H1 (cell line): ENCODE measurements at regions of chr10 and their contacts with region 1.

Region 1: DNA sequence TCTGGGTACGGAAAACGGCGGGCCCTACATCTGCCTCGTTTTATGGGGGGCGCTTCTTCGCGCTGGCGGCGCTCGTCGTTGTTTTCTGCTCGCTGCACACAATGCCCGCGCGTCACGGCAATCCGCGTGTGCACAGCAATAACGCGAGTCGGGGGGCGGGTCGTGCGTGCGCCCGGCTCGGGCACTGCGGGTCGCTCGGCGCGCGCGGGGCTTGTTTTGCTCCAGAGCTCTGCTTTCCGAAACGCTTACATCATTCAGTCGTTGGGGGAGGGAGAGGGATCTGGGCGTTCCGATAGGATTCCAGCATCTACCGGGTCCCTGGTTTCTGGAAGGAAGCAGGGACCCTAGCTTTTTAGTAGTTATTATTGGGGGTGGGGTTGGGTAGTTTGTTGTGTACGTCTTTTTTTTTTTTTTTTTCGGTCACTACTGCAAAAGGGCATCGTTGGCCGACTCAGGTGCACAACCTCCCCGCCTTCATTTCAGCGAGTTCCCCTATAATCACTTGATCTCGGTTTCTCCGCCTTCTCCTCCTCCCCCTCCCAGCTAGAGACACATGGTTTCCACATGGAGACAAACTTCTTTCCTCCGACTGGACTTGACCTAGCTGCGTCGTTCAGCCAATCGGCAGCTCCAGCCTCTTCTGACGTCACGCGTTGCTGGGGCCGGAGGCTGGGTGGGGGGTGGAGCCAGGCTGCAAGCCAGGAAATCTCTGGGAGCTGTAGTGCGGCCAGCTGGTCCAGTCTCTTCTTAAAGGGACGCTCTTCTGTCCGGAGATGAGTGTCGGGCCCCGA is 3.5 kb downstream of the MXI1 start:
- DNase-seq: peak; percentile 93 to 97
- H3K4me3 ChIP-seq: peak overlapping the region; percentile 73 to 80 (median 78)
- H3K27ac ChIP-seq: peak overlapping the region; percentile 2; the same call in 1 of the 2 replicates
- H3K4me1 ChIP-seq: peaks cover 1 to 20% (median 14%) of the 10 kb centered on the region in 4 experiments; a peak in 6 of 7 replicates
- H3K27me3 ChIP-seq: peaks cover 18 to 67% (median 49%) of the 10 kb centered on the region in 4 experiments
- CTCF ChIP-seq: no peak
- EP300 ChIP-seq: 0 out of 3 replicates have a peak, but pooled peaks of 1 of the 2 experiments have one; percentile 30
- POLR2A ChIP-seq: peak; percentile 47 to 59
- RAD21 ChIP-seq: no peak

Region 2: DNA sequence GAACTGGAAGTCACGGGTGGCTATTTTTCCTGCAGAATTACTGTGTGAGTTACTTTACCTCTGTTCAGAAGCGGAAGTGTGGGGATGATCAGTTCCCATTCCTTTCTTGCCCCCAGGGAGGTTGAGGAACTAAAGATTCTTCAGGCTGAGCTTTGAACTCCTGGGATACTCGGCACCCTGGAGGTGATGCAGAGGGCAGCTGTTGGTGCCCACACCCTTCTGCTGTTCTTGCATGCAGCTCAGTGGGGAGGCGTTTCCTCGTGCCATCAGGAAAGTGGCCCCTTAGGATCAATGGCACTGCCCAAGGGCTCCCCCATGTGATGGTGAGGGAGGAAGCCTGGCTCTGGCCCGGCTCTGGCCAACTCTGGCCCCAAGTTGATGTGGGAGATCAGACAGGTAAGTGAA is 48.1 kb before region 1 on chr10:
- CTCF ChIA-PET with region 1: interaction called, 11 read pairs
- POLR2A ChIA-PET with region 1: interaction called, 4 read pairs
- DNase-seq: peak in 1 of 2 experiments; percentile 69
- H3K4me3 ChIP-seq: no peak overlapping the region
- H3K27ac ChIP-seq: no peak overlapping the region
- H3K4me1 ChIP-seq: peaks cover 2 to 8% (median 5%) of the 10 kb centered on the region in 4 experiments
- H3K27me3 ChIP-seq: peaks cover 31 to 71% (median 51%) of the 10 kb centered on the region in 4 experiments
- CTCF ChIP-seq: peak; percentile 20 to 37 (median 33)
- EP300 ChIP-seq: no peak
- POLR2A ChIP-seq: no peak
- RAD21 ChIP-seq: peak; percentile 44 to 60; a peak in 3 of 4 replicates

Region 3: GRCh38 chr10:110192552-110192951 is 18.3 kb before region 1 on chr10:
- CTCF ChIA-PET with region 1: interaction called, 91 read pairs
- POLR2A ChIA-PET with region 1: interaction called, 6 read pairs
- DNase-seq: peak in 1 of 2 experiments; percentile 52
- H3K4me3 ChIP-seq: no peak overlapping the region
- H3K27ac ChIP-seq: no peak overlapping the region
- H3K4me1 ChIP-seq: no peaks in the 10 kb centered on the region
- H3K27me3 ChIP-seq: peaks cover 0 to 4% (median 2%) of the 10 kb centered on the region in 4 experiments; a peak in 2 of 7 replicates
- CTCF ChIP-seq: peak; percentile 38 to 75 (median 63)
- EP300 ChIP-seq: no peak
- POLR2A ChIP-seq: no peak
- RAD21 ChIP-seq: peak in 1 of 2 experiments; percentile 45; a peak in 2 of 4 replicates

Region 4: DNA sequence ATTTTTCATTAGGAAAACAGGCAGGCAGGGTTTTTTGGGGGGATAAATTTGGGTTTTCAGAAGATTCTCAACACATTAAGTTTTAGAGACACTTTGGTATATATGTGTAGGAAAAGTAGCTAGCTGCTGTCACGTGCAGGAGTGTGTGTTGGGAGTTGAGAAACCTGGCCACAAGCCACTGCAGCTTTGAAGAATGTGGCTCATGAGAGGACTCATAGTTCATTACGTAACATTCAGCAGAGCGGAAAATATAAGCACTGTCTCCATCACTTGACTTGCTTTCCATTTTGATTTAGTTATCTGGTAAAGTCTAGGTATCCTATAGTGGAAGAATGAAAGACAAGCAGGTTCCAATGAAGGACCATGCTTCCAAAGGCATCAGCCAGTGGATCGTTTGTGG is 62.6 kb after region 1 on chr10:
- CTCF ChIA-PET with region 1: interaction called, 47 read pairs
- POLR2A ChIA-PET with region 1: no interaction called
- DNase-seq: no peak
- H3K4me3 ChIP-seq: no peak overlapping the region
- H3K27ac ChIP-seq: no peak overlapping the region
- H3K4me1 ChIP-seq: no peaks in the 10 kb centered on the region
- H3K27me3 ChIP-seq: no peaks in the 10 kb centered on the region
- CTCF ChIP-seq: no peak
- EP300 ChIP-seq: no peak
- POLR2A ChIP-seq: no peak
- RAD21 ChIP-seq: no peak

Region 5: DNA sequence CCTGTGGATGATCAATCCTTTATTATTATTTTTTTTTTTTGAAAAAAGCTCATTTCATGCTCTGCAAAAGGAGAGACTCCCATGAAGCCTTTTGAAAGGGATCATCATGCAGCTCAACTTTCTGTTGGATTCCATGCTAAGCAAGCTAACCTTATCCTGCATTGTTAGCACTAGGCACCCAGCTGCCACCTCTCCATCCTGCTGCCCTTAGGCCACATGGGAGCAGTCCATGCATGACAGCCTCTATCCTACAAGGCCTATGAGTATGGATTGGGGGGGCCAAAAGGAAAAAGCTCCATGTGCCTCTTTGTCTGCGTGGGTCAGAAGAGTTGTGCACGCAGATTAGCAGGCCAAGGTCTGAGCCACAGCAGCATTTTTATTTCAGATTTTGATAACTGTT is 74.6 kb after region 1 on chr10:
- CTCF ChIA-PET with region 1: interaction called, 47 read pairs
- POLR2A ChIA-PET with region 1: interaction called, 3 read pairs
- DNase-seq: no peak
- H3K4me3 ChIP-seq: no peak overlapping the region
- H3K27ac ChIP-seq: no peak overlapping the region
- H3K4me1 ChIP-seq: peaks cover 0 to 3% (median 2%) of the 10 kb centered on the region in 4 experiments; a peak in 3 of 7 replicates
- H3K27me3 ChIP-seq: no peaks in the 10 kb centered on the region
- CTCF ChIP-seq: no peak
- EP300 ChIP-seq: no peak
- POLR2A ChIP-seq: no peak
- RAD21 ChIP-seq: no peak